PC-9 (cell line): ENCODE measurements at regions of chr17 and their contacts with region 1.

Region 1: DNA sequence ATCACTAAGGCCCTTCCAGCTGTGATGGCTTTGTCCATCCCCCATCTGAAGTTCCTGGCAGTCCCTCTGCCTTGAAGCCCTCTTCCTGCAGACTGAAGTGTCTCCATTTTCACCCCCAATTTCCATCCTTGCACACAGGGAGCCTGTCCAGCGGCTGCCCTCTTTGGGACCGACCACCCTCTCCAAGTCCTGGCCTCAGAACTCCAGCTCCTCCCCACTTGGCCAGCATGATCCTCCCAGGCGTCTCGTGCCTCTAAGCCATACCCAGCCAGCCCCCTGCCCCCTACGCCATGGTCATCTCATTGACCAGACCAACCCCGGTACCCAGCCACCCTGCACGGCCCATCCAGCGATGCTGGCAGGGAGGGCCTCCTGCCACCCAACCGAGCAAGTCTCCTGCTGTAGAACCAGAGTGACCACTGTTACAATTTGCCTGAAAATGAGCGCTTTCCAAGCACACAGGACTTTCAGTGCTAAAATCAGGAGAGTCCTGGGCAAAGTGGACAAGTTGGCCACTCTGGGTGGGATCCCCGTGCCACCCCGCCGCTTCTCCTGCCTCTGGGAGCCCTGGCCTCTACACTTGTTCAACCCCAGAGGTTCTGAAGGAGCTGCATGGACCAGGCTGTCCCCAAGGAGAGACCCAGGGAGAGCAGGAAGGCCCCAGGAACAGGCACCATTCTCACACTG is 362.0 kb downstream of the SEC14L1 start:
- DNase-seq: no peak
- H3K4me3 ChIP-seq: no peak overlapping the region
- H3K27ac ChIP-seq: no peak overlapping the region
- H3K4me1 ChIP-seq: no peaks in the 10 kb centered on the region
- H3K27me3 ChIP-seq: no peaks in the 10 kb centered on the region
- CTCF ChIP-seq: no peak

Region 2: GRCh38 chr17:76612977-76613851 is 889.6 kb before region 1 on chr17:
- CTCF ChIA-PET with region 1: no interaction called
- POLR2A ChIA-PET with region 1: no interaction called
- intact Hi-C with region 1: no loop called
- DNase-seq: peak; percentile 94 to 95
- H3K4me3 ChIP-seq: no peak overlapping the region
- H3K27ac ChIP-seq: no peak overlapping the region
- H3K4me1 ChIP-seq: peaks cover 28% of the 10 kb centered on the region
- H3K27me3 ChIP-seq: no peaks in the 10 kb centered on the region
- CTCF ChIP-seq: peak; percentile 56

Region 3: DNA sequence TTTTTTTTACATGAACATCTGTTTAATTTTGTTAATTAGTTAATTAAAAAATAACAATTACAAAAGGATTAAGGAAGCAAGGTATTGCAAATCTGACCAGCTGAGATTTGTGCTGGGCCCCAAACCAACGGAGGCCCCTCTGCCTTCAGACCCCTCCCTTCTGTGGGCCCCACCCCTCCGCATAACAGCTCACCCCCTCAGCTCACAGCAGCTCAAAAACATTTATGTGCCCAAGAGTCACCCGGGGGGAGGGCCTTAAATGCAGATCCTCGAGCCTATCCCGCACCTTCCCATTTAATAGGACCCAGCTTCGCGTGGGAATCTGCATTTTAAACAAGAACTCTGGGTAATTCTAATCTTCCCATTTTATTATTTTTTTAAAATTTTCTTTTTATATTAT is 559.6 kb before region 1 on chr17:
- CTCF ChIA-PET with region 1: interaction called, 10 read pairs
- POLR2A ChIA-PET with region 1: no interaction called
- intact Hi-C with region 1: no loop called
- DNase-seq: no peak
- H3K4me3 ChIP-seq: no peak overlapping the region
- H3K27ac ChIP-seq: no peak overlapping the region
- H3K4me1 ChIP-seq: no peaks in the 10 kb centered on the region
- H3K27me3 ChIP-seq: no peaks in the 10 kb centered on the region
- CTCF ChIP-seq: no peak

Region 4: DNA sequence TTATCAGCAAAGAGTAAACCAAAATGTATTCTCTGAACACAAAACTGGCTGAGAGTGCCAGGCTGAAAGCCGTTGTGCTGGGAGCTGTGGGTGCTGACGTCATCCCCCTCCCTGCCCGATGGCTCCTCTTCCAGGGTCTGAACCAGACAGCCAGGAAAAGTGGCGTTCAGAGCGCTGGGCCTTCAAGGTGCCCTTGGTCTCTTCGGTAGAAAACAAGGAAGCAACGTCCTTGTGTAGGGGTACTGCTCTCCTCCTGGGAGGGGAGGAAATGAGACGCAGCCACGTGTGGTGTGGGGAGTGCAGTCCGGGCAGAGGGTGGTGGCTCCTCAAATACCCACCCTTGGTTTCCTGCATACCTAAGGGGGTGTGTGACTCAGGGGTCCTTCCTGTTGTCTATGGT is 32.7 kb after region 1 on chr17:
- CTCF ChIA-PET with region 1: interaction called, 10 read pairs
- POLR2A ChIA-PET with region 1: no interaction called
- intact Hi-C with region 1: no loop called
- DNase-seq: no peak
- H3K4me3 ChIP-seq: no peak overlapping the region
- H3K27ac ChIP-seq: no peak overlapping the region
- H3K4me1 ChIP-seq: no peaks in the 10 kb centered on the region
- H3K27me3 ChIP-seq: peaks cover 32% of the 10 kb centered on the region
- CTCF ChIP-seq: no peak

Region 5: GRCh38 chr17:77602062-77602746 is 99.4 kb after region 1 on chr17:
- CTCF ChIA-PET with region 1: no interaction called
- POLR2A ChIA-PET with region 1: no interaction called
- intact Hi-C with region 1: no loop called
- DNase-seq: no peak
- H3K4me3 ChIP-seq: no peak overlapping the region
- H3K27ac ChIP-seq: no peak overlapping the region
- H3K4me1 ChIP-seq: no peaks in the 10 kb centered on the region
- H3K27me3 ChIP-seq: peaks cover 90% of the 10 kb centered on the region
- CTCF ChIP-seq: no peak